Left ventricle myocardium inferior (tissue), 1 donor: ENCODE measurements at regions of chr1 and their contacts with region 1.

Region 1: GRCh38 chr1:22039594-22040285 is 12.8 kb upstream of the CDC42 start:
- DNase-seq: peak; percentile 69
- H3K4me3 ChIP-seq: no peak overlapping the region
- H3K27ac ChIP-seq: peak overlapping the region; percentile 64
- H3K4me1 ChIP-seq: peaks cover 28% of the 10 kb centered on the region
- H3K27me3 ChIP-seq: no peaks in the 10 kb centered on the region
- CTCF ChIP-seq: no peak

Region 2: DNA sequence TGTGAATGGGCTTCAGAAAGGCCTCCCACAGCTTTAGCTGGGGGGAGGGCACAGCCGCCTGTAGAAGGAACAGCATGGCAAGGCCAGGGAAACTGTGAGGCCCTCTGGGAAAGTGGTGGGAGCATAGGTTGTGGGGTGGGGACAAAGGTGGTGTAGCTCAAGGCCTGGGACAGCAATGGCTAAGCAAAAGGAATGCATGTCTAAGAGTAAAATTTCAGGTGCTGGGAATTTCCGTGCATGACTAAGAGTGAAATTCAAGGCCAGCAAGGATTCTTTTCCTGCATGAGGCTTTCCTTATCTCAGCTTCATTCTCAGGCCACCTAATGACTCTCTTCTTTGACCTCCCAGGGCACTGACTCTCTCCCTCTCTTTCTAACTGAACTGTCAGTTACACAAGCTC is 189.6 kb after region 1 on chr1:
- intact Hi-C with region 1: loop called (anchors 10 kb)
- DNase-seq: no peak
- H3K4me3 ChIP-seq: no peak overlapping the region
- H3K27ac ChIP-seq: no peak overlapping the region
- H3K4me1 ChIP-seq: no peaks in the 10 kb centered on the region
- H3K27me3 ChIP-seq: peaks cover 64% of the 10 kb centered on the region
- CTCF ChIP-seq: no peak